Heart right ventricle (tissue), 16 donors: ENCODE measurements at regions of chr15 and their contacts with region 1.

Region 1: GRCh38 chr15:40506964-40507571 is 36.3 kb downstream of the CHST14 start:
- DNase-seq: peak; percentile 79 to 80
- ATAC-seq: peak; percentile 80 to 94 (median 90)
- H3K4me3 ChIP-seq: peak overlapping the region in 9 of 10 donors; percentile 13 to 45 (median 28)
- H3K27ac ChIP-seq: peak overlapping the region in 2 of 10 donors; percentile 10 to 11
- H3K4me1 ChIP-seq: peaks cover 0 to 27% (median 20%) of the 10 kb centered on the region in 9 donors
- H3K27me3 ChIP-seq: peaks cover 0 to 62% (median 0%) of the 10 kb centered on the region in 7 donors
- CTCF ChIP-seq: peak; percentile 47 to 88 (median 69)

Region 2: DNA sequence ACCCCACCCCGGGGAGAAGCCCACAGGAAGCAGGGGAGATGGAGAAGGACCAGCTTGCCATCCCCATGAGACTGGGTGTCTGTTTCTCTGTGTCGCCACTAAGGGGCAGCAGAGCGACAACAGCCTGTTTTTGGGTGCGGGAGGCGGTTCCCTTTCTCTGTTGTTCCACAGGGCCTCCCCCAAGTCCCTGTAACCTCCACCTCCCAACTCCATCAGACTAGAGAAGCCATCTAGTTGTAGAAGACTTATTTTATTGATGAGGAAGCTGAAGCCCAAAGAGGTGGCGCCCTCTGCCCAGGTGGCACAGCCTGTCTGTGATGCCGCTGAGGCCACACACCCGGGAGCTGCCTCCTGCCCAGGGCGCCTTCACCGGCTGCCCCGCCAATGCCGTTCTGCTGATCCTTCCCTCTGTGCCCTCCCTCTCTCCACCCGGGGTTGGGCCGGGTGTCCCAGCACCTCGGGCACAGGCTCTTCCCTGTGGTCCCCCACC is 162.4 kb before region 1 on chr15:
- intact Hi-C with region 1: no loop called
- DNase-seq: peak; percentile 61 to 68
- ATAC-seq: peak in 1 of 8 donors; percentile 18
- H3K4me3 ChIP-seq: no peak overlapping the region
- H3K27ac ChIP-seq: peak overlapping the region in 5 of 10 donors; percentile 9 to 99 (median 72)
- H3K4me1 ChIP-seq: peaks cover 24 to 64% (median 50%) of the 10 kb centered on the region in 9 donors
- H3K27me3 ChIP-seq: no peaks in the 10 kb centered on the region
- CTCF ChIP-seq: peak; percentile 58 to 85 (median 82)

Region 3: DNA sequence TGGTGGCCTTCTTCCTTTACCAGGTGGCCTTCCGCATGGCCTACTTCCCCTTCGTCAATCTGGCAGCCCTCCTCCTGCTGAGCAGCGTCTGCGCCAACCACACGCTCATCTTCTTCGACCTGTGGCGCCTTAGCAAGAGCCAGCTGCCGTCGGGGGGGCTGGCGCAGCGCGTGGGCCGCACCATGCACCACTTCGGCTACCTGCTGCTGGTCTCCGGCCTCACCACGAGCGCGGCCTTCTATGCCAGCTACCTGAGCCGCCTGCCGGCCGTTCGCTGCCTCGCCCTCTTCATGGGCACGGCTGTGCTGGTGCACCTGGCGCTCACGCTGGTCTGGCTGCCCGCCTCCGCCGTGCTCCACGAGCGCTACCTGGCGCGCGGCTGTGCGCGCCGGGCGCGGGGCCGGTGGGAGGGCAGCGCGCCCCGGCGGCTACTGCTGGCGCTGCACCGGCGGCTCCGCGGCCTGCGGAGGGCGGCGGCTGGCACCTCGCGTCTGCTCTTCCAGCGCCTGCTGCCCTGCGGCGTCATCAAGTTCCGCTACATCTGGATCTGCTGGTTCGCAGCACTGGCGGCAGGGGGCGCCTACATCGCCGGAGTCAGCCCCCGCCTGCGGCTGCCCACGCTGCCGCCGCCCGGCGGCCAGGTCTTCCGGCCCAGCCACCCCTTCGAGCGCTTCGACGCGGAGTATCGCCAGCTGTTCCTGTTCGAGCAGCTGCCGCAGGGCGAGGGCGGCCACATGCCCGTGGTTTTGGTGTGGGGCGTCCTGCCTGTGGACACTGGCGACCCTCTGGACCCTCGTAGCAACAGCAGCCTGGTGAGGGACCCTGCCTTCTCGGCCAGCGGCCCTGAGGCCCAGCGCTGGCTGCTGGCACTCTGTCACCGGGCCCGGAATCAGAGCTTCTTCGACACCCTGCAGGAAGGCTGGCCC is 139.1 kb before region 1 on chr15:
- intact Hi-C with region 1: loop called in 1 of 10 experiments (anchors 5 kb)
- DNase-seq: peak; percentile 79 to 84
- ATAC-seq: peak; percentile 60 to 79 (median 68)
- H3K4me3 ChIP-seq: peak overlapping the region in 9 of 10 donors; percentile 12 to 57 (median 38)
- H3K27ac ChIP-seq: peak overlapping the region; percentile 60 to 91 (median 85)
- H3K4me1 ChIP-seq: peaks cover 3 to 38% (median 29%) of the 10 kb centered on the region in 9 donors
- H3K27me3 ChIP-seq: no peaks in the 10 kb centered on the region
- CTCF ChIP-seq: peak; percentile 75 to 93 (median 88)

Region 4: GRCh38 chr15:40405501-40406381 is 101.3 kb before region 1 on chr15 and contains the start of gene IVD:
- intact Hi-C with region 1: no loop called
- DNase-seq: peak; percentile 95 to 96
- ATAC-seq: peak; percentile 99 to 100 (median 100)
- H3K4me3 ChIP-seq: peak within 1 kb of the TSS; percentile 67 to 98 (median 82)
- H3K27ac ChIP-seq: peak within 1 kb of the TSS in 9 of 10 donors; percentile 62 to 87 (median 78)
- H3K4me1 ChIP-seq: peaks cover 0 to 31% (median 23%) of the 10 kb centered on the region in 9 donors
- H3K27me3 ChIP-seq: no peaks in the 10 kb centered on the region
- CTCF ChIP-seq: no peak
- total RNA-seq, gene IVD: 71.1 to 143 (median 109) TPM

Region 5: GRCh38 chr15:40440743-40441564 is 66.1 kb before region 1 on chr15 and contains the start of gene BAHD1:
- intact Hi-C with region 1: loop called in 5 of 10 experiments (anchors 2 to 10 kb)
- DNase-seq: peak; percentile 98 to 99
- ATAC-seq: peak; percentile 87 to 96 (median 94)
- H3K4me3 ChIP-seq: peak within 1 kb of the TSS; percentile 73 to 99 (median 88)
- H3K27ac ChIP-seq: peak within 1 kb of the TSS; percentile 61 to 89 (median 82)
- H3K4me1 ChIP-seq: peaks cover 19 to 83% (median 65%) of the 10 kb centered on the region in 9 donors
- H3K27me3 ChIP-seq: peaks cover 8 to 52% (median 18%) of the 10 kb centered on the region in 7 donors
- CTCF ChIP-seq: peak in 4 of 9 donors; percentile 22 to 53 (median 40)
- total RNA-seq, gene BAHD1: 12.1 to 17.8 (median 16.0) TPM

Region 6: GRCh38 chr15:40454904-40455391 is 52.1 kb before region 1 on chr15:
- intact Hi-C with region 1: loop called in 2 of 10 experiments (anchors 10 kb)
- DNase-seq: no peak
- ATAC-seq: no peak
- H3K4me3 ChIP-seq: no peak overlapping the region
- H3K27ac ChIP-seq: peak overlapping the region in 1 of 10 donors; percentile 21
- H3K4me1 ChIP-seq: peaks cover 23 to 73% (median 60%) of the 10 kb centered on the region in 9 donors
- H3K27me3 ChIP-seq: no peaks in the 10 kb centered on the region
- CTCF ChIP-seq: no peak

Region 7: GRCh38 chr15:40470423-40471104 is 36.5 kb before region 1 on chr15 and contains the start of gene CHST14:
- intact Hi-C with region 1: no loop called
- DNase-seq: peak; percentile 48 to 72
- ATAC-seq: peak; percentile 84 to 95 (median 86)
- H3K4me3 ChIP-seq: peak within 1 kb of the TSS; percentile 79 to 100 (median 94)
- H3K27ac ChIP-seq: peak within 1 kb of the TSS; percentile 87 to 95 (median 92)
- H3K4me1 ChIP-seq: peaks cover 6 to 26% (median 20%) of the 10 kb centered on the region in 9 donors
- H3K27me3 ChIP-seq: no peaks in the 10 kb centered on the region
- CTCF ChIP-seq: peak in 2 of 9 donors; percentile 13 to 24
- total RNA-seq, gene CHST14: 5.7 to 11.5 (median 9.0) TPM

Region 8: DNA sequence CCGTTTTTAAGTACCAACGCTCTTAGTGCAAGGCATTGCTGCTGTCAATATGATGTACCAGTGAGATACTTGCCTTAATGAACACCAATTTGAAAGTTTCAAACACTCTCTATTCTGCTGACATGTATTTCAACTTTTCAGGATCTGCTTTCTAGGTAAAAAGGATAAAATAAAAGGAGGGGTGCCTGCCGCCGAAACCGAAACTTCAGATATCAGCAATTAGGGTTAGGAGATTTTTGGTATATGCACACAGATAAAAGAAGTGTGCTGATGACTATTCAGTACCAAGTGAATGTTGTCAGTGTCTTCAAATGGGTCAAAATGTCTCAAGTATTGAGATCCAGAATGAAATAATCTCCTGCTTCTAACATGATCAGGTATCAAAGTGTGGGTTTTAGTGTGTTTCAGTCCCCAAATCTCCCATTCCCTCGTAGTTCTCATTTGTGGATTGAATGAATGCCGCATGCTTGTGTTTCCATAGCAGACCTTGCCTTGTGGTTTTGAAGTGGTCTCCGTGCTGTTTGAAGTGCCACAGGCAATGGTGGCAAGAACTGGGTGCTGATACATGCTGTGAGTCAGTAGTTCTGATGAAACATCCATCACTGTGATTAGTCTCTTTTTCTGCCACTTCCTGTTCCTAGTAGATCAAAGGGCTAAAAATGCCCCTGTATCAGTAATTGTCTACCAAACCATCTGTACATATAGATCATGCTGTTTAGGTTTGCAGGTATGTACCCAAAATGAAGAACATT is 13.8 kb before region 1 on chr15:
- intact Hi-C with region 1: no loop called
- DNase-seq: no peak
- ATAC-seq: no peak
- H3K4me3 ChIP-seq: no peak overlapping the region
- H3K27ac ChIP-seq: no peak overlapping the region
- H3K4me1 ChIP-seq: no peaks in the 10 kb centered on the region
- H3K27me3 ChIP-seq: no peaks in the 10 kb centered on the region
- CTCF ChIP-seq: no peak

Region 9: DNA sequence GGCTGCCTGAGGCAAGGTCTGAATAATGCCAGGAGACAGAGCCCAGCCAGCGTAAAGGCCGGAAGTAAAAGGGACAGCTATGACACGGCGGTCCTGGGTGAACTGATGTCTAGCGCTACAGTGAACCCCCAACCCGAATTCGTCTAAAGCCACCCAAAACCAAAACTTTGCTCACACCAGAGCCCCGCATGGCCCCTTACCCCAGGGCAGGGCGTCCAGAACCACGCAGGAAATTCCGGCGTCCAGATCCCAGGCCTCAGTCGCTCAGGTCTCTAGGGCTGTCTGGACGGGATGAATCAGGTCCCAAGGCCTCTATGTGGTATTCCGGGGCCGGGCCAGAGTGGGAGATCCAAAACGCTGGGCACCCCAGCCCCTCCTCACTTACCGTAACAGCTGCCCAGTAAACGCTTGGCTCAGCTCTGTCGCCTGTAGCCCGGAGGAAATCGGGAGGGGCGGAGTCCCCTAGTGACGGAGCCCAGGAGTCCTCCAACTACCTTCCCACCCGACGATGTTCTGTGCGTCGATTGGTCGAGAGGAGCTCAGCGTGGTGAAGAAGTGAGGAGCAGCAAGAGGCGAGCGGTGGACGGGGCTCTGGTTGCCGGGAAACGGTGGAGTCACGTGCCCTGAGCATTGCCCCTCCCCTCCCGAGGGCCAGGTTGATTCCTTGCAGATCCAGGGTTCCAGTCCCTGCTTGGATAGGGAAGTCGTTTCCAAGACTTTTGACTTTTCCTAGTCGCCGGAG is 57.7 kb after region 1 on chr15 and contains the start of gene CCDC32:
- intact Hi-C with region 1: loop called in 1 of 10 experiments (anchors 5 kb)
- DNase-seq: peak; percentile 94 to 98
- ATAC-seq: peak; percentile 97 to 99 (median 98)
- H3K4me3 ChIP-seq: peak within 1 kb of the TSS; percentile 24 to 95 (median 82)
- H3K27ac ChIP-seq: peak within 1 kb of the TSS; percentile 72 to 97 (median 92)
- H3K4me1 ChIP-seq: peaks cover 0 to 50% (median 22%) of the 10 kb centered on the region in 9 donors
- H3K27me3 ChIP-seq: no peaks in the 10 kb centered on the region
- CTCF ChIP-seq: peak in 1 of 9 donors; percentile 16
- total RNA-seq, gene CCDC32: 16.0 to 30.1 (median 21.6) TPM

Region 10: DNA sequence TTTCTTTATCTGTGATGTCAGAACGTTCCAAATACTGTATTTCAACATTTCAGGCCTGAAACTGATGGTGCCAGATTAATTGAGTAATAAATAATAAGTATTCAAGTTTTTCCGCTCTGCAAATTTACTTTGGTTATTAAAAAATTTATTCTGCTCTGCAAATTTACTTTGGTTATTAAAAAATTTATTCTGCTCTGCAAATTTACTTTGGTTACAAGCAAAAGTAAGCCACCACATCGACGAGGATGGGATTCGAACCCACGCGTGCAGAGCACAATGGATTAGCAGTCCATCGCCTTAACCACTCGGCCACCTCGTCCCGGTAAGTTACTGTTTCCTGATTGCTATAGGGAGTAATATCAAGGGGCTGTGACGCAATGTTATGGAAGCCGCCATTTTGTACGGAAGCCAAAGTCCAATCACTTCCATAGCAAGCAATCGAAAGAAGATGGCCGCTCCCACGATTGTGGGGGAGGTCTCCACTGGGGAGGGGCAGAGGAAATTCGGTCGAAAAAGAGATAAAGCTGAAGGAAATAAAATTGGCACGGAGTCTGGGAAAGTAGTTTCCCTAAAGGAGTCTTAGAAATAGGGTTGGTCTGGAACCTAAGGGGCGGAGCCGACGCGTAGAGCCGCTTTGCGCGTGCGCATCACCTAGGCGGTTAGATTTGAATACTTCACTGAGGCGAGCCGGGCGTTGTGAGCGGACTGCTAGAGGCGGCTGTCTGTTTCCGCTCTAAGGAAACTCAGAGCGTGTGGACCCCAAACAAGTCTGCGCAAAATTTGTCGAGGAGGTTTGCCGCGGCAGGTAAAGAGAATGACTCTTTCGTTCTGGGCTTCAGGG is 86.7 kb after region 1 on chr15 and contains the start of gene KNL1:
- intact Hi-C with region 1: loop called in 1 of 10 experiments (anchors 10 kb)
- DNase-seq: peak; percentile 85 to 95
- ATAC-seq: peak; percentile 94 to 97 (median 96)
- H3K4me3 ChIP-seq: peak within 1 kb of the TSS; percentile 41 to 88 (median 62)
- H3K27ac ChIP-seq: peak within 1 kb of the TSS; percentile 55 to 97 (median 89)
- H3K4me1 ChIP-seq: peaks cover 0 to 33% (median 12%) of the 10 kb centered on the region in 9 donors
- H3K27me3 ChIP-seq: no peaks in the 10 kb centered on the region
- CTCF ChIP-seq: peak in 1 of 9 donors; percentile 18
- total RNA-seq, gene KNL1: 0.21 to 2.6 (median 0.73) TPM

Region 11: GRCh38 chr15:40694688-40695468 is 187.8 kb after region 1 on chr15 and contains the start of gene RAD51:
- intact Hi-C with region 1: loop called in 1 of 10 experiments (anchors 10 kb)
- DNase-seq: peak; percentile 94
- ATAC-seq: peak; percentile 98 to 99 (median 99)
- H3K4me3 ChIP-seq: peak within 1 kb of the TSS; percentile 52 to 90 (median 84)
- H3K27ac ChIP-seq: peak within 1 kb of the TSS; percentile 94 to 100 (median 98)
- H3K4me1 ChIP-seq: peaks cover 0 to 24% (median 18%) of the 10 kb centered on the region in 9 donors
- H3K27me3 ChIP-seq: no peaks in the 10 kb centered on the region
- CTCF ChIP-seq: peak in 1 of 9 donors; percentile 18
- total RNA-seq, gene RAD51: 0.30 to 3.6 (median 0.76) TPM